Dendritic cell treated with granulocyte-macrophage colony-stimulating factor and Interleukin-4, amounts not matched to agents 40 ng/mL and 50 ng/mL, for 4 days (primary cell): ENCODE measurements at regions of chr6 and their contacts with region 1.

Region 1: DNA sequence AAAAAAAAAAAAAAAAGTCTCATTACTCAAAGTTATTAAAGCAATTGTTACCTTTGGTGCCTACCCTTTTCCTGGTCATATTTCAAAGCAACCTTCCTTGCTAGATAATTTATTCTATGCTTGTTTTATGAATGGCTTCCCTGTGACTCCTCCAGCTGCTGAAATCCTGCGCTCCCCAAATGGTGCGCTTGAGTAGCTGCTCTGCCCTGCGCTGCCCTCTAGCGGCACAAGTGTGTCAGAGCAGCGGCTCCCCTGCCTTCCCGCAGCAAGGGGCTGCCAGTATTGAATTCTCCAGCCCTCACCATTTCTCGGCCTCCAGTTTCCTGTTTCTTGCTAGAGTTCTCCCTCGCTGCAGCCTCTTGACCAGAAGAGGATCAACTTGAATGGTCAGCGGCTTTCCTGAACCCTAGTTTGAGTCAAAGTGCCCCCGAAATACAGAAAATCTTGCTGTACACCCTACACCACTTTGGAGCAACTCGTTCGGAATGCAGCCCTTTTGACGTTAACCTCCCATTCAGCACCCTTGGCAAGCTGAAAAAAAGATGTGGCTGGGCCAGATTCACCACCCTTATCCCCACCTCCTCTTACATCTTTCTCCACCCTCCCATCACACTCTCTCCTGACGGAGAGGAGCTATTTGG is 60.4 kb upstream of the KLHL31 start:
- H3K4me3 Mint-ChIP-seq: no peak overlapping the region
- H3K27ac Mint-ChIP-seq: no peak overlapping the region
- H3K4me1 Mint-ChIP-seq: peaks cover 14% of the 10 kb centered on the region
- H3K27me3 Mint-ChIP-seq: peaks cover 15% of the 10 kb centered on the region

Region 2: DNA sequence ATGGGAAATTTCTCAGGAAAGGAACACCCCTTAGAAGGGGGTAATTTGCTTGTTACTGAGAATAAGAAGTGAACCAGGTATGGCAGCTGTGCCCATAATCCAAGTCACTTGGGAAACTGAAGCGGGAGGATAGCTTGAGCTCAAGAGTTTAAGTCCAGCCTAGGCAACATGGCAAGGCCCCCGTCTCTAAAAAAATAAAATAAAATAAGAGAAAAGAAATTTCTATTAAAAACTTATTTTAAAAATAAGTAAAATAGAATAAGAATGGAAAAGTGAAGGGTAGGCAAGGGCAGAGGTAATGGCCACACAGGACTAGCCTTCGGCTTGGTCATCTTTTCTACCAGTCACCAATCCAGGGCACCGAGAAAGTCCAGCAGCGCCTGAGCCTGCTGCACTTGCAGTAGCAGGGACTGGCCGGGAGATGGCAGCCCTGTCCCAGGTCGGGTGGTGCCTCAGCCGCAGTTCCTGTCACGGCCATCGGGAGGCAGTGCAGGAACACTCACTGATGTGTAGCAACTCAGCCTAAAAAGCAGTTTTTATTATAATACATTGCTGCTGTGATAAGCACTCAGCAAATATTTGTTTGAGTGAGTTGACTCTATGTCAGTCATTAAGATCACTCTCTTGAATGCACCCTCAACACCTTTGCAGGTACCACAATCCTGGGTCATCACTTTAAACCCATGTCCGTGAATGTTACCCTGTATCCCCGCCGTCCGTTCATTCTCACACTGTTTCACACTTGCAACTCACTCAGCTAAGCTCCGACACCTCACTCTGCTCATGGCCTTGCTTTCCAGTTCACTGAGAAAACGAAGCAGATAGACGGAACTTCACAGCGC is 554.1 kb before region 1 on chr6:
- intact Hi-C with region 1: loop called (anchors 10 kb)
- H3K4me3 Mint-ChIP-seq: no peak overlapping the region
- H3K27ac Mint-ChIP-seq: no peak overlapping the region
- H3K4me1 Mint-ChIP-seq: peaks cover 15% of the 10 kb centered on the region
- H3K27me3 Mint-ChIP-seq: peaks cover 2% of the 10 kb centered on the region

Region 3: DNA sequence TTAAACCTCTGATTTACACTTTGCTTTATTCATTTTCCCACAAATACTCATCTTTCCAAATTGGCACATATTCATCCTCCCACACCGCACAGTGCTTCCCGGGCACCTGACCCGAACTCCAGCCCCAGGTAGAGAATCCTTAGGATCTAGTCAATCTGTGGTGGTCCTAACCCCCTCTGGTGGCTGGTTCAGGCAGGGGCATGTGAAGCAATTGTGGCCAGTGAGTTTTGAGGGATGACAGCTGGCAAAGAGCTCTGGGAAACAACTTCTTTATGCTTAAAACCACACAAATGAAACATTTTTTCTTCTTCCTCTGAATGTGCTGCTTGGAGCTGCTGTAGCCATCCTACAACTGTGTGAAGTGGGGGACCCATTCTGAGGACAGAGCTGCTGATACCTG is 431.8 kb before region 1 on chr6:
- intact Hi-C with region 1: no loop called
- H3K4me3 Mint-ChIP-seq: no peak overlapping the region
- H3K27ac Mint-ChIP-seq: no peak overlapping the region
- H3K4me1 Mint-ChIP-seq: peaks cover 26% of the 10 kb centered on the region
- H3K27me3 Mint-ChIP-seq: no peaks in the 10 kb centered on the region

Region 4: GRCh38 chr6:53492860-53493634 is 232.9 kb before region 1 on chr6:
- intact Hi-C with region 1: loop called (anchors 1 kb)
- H3K4me3 Mint-ChIP-seq: no peak overlapping the region
- H3K27ac Mint-ChIP-seq: no peak overlapping the region
- H3K4me1 Mint-ChIP-seq: no peaks in the 10 kb centered on the region
- H3K27me3 Mint-ChIP-seq: peaks cover 15% of the 10 kb centered on the region

Region 5: GRCh38 chr6:53573299-53573698 is 152.6 kb before region 1 on chr6:
- intact Hi-C with region 1: no loop called
- H3K4me3 Mint-ChIP-seq: no peak overlapping the region
- H3K27ac Mint-ChIP-seq: no peak overlapping the region
- H3K4me1 Mint-ChIP-seq: peaks cover 5% of the 10 kb centered on the region
- H3K27me3 Mint-ChIP-seq: peaks cover 4% of the 10 kb centered on the region

Region 6: GRCh38 chr6:53752856-53753255 is 26.9 kb after region 1 on chr6:
- intact Hi-C with region 1: no loop called
- H3K4me3 Mint-ChIP-seq: no peak overlapping the region
- H3K27ac Mint-ChIP-seq: no peak overlapping the region
- H3K4me1 Mint-ChIP-seq: no peaks in the 10 kb centered on the region
- H3K27me3 Mint-ChIP-seq: no peaks in the 10 kb centered on the region

Region 7: DNA sequence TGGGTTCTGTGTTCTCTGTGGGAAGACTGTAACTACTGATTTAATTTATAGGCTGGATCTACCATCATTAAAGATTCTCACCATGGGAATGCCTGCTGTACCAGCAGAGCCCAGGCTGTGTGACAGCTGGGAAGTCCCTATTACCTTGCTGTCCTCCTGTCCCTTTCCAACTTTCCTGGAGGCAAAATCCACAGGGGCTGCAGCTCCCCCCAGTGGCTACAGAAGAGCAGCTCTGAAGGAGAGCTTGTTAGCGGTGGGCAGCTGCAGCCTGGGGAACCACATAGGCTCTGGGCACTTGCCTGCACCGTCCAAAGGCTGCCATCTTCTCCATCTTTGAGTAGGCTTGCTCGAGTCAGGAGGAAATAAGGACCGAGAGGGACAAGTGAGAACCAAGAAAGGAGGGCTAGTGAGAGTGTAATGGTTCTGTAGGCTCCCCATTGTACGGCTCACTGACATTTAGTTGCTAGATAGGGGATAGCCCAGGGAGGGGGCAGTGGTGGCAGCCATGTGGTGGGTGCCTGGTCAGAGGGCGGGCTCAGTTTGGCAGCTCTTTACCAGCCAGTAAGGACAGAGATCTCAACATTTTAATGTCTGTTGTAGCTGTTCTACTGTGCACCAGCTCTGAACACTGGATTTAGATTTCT is 230.3 kb after region 1 on chr6:
- intact Hi-C with region 1: loop called (anchors 5 kb)
- H3K4me3 Mint-ChIP-seq: no peak overlapping the region
- H3K27ac Mint-ChIP-seq: no peak overlapping the region
- H3K4me1 Mint-ChIP-seq: peaks cover 5% of the 10 kb centered on the region
- H3K27me3 Mint-ChIP-seq: peaks cover 3% of the 10 kb centered on the region